K562 (cell line): ENCODE measurements at regions of chr5 and their contacts with region 1.

Region 1: DNA sequence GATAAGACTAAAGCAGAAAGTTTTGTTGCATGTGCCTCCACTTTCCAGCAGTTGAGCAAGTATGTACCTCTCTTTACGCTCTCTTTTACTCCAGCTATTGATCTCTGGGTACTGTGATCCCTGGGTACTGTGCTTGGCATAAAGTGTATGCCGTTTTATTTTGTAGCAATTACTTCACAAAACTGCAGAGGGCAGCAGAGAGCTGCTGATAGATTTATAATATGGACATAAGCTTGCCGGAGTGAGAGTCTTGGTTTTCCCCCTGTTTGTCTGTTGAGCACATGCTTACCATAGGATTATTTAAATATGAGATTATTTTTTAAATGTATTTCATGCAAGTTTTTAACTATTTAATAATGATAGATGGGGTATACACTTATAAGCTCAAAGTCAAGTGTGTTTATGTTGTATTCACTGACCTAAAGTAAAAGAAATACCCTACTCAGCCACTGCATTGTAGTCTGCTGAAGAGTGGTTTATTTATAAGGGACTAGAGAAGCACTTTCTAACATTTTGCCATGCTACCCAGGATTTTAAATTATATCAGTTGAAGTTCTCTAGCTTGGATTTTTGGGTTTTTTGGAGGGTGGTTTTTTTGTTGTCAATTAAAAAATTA is 13.0 kb downstream of the TTC1 start:
- DNase-seq: peak; percentile 58 to 75 (median 62)
- ATAC-seq: peak; percentile 94
- H3K4me3 ChIP-seq: no peak overlapping the region
- H3K27ac ChIP-seq: no peak overlapping the region
- H3K4me1 ChIP-seq: no peaks in the 10 kb centered on the region
- H3K27me3 ChIP-seq: no peaks in the 10 kb centered on the region
- CTCF ChIP-seq: peak; percentile 72 to 85 (median 76)
- EP300 ChIP-seq: no peak
- POLR2A ChIP-seq: no peak
- RAD21 ChIP-seq: peak; percentile 78 to 83

Region 2: GRCh38 chr5:160008877-160009590 is 12.9 kb before region 1 on chr5 and contains the start of gene TTC1:
- CTCF ChIA-PET with region 1: no interaction called
- POLR2A ChIA-PET with region 1: interaction called, 23 read pairs
- in situ Hi-C with region 1: no loop called
- intact Hi-C with region 1: no loop called
- DNase-seq: peak; percentile 90 to 99 (median 90)
- ATAC-seq: peak; percentile 97
- H3K4me3 ChIP-seq: peak within 1 kb of the TSS; percentile 88
- H3K27ac ChIP-seq: peak within 1 kb of the TSS; percentile 89
- H3K4me1 ChIP-seq: peaks cover 3% of the 10 kb centered on the region in 2 experiments; a peak in 3 of 5 replicates
- H3K27me3 ChIP-seq: no peaks in the 10 kb centered on the region
- CTCF ChIP-seq: no peak
- EP300 ChIP-seq: no peak
- POLR2A ChIP-seq: peak; percentile 97
- RAD21 ChIP-seq: no peak
- polyA plus RNA-seq, gene TTC1: 121 to 173 TPM

Region 3: DNA sequence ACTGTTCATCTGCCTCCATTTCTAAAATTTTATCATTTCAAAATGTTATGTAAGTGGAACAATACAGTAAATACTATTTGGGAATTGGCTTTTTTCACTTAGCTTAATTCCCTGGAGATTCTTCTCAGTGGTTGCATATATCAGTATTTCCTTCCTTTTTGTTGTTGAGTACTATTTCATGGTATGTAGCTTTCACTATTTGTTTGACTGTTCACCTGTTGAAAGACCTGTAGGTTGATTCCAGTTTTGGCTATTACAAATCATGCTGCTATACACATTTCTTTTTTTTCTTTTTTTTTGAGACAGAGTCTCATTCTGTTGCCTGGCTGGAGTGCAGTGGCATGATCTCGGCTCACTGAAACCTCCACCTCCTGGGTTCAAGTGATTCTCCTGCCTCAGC is 130.3 kb after region 1 on chr5:
- CTCF ChIA-PET with region 1: no interaction called
- POLR2A ChIA-PET with region 1: no interaction called
- in situ Hi-C with region 1: no loop called
- intact Hi-C with region 1: no loop called
- DNase-seq: no peak
- ATAC-seq: no peak
- H3K4me3 ChIP-seq: no peak overlapping the region
- H3K27ac ChIP-seq: no peak overlapping the region
- H3K4me1 ChIP-seq: no peaks in the 10 kb centered on the region
- H3K27me3 ChIP-seq: peaks cover 4 to 14% of the 10 kb centered on the region in 2 experiments; a peak in 4 of 5 replicates
- CTCF ChIP-seq: no peak
- EP300 ChIP-seq: no peak
- POLR2A ChIP-seq: no peak
- RAD21 ChIP-seq: no peak

Region 4: GRCh38 chr5:160240350-160240749 is 218.4 kb after region 1 on chr5:
- CTCF ChIA-PET with region 1: no interaction called
- POLR2A ChIA-PET with region 1: no interaction called
- in situ Hi-C with region 1: no loop called
- intact Hi-C with region 1: loop called (anchors 5 kb)
- DNase-seq: peak in 2 of 4 experiments; percentile 45 to 69
- ATAC-seq: peak; percentile 67
- H3K4me3 ChIP-seq: no peak overlapping the region
- H3K27ac ChIP-seq: no peak overlapping the region
- H3K4me1 ChIP-seq: peaks cover 17 to 22% of the 10 kb centered on the region in 2 experiments
- H3K27me3 ChIP-seq: peaks cover 0 to under 1% of the 10 kb centered on the region in 2 experiments; a peak in 1 of 5 replicates
- CTCF ChIP-seq: no peak
- EP300 ChIP-seq: no peak
- POLR2A ChIP-seq: no peak
- RAD21 ChIP-seq: no peak

Region 5: GRCh38 chr5:160390787-160391696 is 369.1 kb after region 1 on chr5:
- CTCF ChIA-PET with region 1: interaction called, 17 read pairs
- POLR2A ChIA-PET with region 1: interaction called, 3 read pairs
- in situ Hi-C with region 1: no loop called
- intact Hi-C with region 1: loop called (anchors 1 kb)
- DNase-seq: peak in 1 of 4 experiments; percentile 34
- ATAC-seq: peak; percentile 72
- H3K4me3 ChIP-seq: no peak overlapping the region
- H3K27ac ChIP-seq: no peak overlapping the region
- H3K4me1 ChIP-seq: no peaks in the 10 kb centered on the region
- H3K27me3 ChIP-seq: no peaks in the 10 kb centered on the region
- CTCF ChIP-seq: peak in 2 of 3 experiments; percentile 32 to 69; a peak in 3 of 6 replicates
- EP300 ChIP-seq: no peak
- POLR2A ChIP-seq: no peak
- RAD21 ChIP-seq: peak; percentile 74 to 81